Breast epithelium (tissue), 4 donors: ENCODE measurements at regions of chr7 and their contacts with region 1.

Region 1: GRCh38 chr7:122481046-122481445 is 176.5 kb upstream of the FEZF1 start:
- DNase-seq: no peak
- H3K4me3 ChIP-seq: no peak overlapping the region
- H3K27ac ChIP-seq: no peak overlapping the region
- H3K4me1 ChIP-seq: no peaks in the 10 kb centered on the region
- H3K27me3 ChIP-seq: no peaks in the 10 kb centered on the region
- CTCF ChIP-seq: no peak
- POLR2A ChIP-seq: no peak

Region 2: DNA sequence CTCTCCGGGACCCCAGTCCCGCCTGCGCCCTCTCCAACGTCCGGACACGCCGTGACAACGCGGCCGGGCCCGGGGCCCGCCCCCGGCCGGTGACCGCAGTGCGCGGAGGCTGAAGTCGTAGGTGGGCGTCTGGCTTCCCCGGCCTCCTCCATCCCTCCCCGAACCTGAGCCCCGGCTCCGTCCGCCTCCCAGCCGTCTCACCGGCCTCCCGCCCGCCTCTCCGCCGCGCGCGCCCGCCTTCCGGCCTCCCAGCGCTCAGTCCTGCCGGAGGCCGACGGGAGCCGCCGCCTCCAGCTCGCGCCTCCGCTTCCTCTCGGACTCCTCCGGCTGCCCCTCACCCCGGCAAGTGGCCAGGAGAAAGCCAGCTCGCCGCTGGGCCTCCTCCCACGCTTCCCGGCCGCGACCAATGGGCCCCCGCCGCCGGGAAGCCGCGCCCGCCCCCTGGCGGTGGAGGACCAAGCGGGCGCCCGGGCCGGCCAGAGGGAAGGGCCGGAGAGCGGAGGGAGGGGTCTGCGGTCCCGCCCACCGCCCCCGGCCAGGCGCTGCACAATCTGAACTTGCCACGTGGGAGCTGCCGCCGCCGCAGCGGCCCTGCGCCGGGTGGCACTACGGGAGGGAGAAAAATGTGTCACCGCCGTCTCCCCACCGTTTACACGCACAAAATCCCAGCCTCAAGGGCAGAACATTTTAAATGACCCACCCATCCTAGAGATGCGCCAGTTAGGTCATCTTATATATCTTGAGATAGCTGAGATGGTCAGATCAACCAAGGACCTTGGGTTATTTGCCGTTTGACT is 1084.9 kb before region 1 on chr7 and contains the start of gene FAM3C:
- intact Hi-C with region 1: no loop called
- DNase-seq: peak; percentile 81 to 83
- H3K4me3 ChIP-seq: peak within 1 kb of the TSS; percentile 84 to 95 (median 92)
- H3K27ac ChIP-seq: peak within 1 kb of the TSS; percentile 87 to 90
- H3K4me1 ChIP-seq: no peaks in the 10 kb centered on the region
- H3K27me3 ChIP-seq: no peaks in the 10 kb centered on the region
- CTCF ChIP-seq: peak; percentile 44 to 97 (median 91)
- POLR2A ChIP-seq: peak; percentile 48
- total RNA-seq, gene FAM3C: 35.8 to 89.7 (median 50.8) TPM

Region 3: GRCh38 chr7:121449329-121449728 is 1031.7 kb before region 1 on chr7:
- intact Hi-C with region 1: no loop called
- DNase-seq: no peak
- H3K4me3 ChIP-seq: no peak overlapping the region
- H3K27ac ChIP-seq: no peak overlapping the region
- H3K4me1 ChIP-seq: no peaks in the 10 kb centered on the region
- H3K27me3 ChIP-seq: no peaks in the 10 kb centered on the region
- CTCF ChIP-seq: no peak
- POLR2A ChIP-seq: no peak

Region 4: DNA sequence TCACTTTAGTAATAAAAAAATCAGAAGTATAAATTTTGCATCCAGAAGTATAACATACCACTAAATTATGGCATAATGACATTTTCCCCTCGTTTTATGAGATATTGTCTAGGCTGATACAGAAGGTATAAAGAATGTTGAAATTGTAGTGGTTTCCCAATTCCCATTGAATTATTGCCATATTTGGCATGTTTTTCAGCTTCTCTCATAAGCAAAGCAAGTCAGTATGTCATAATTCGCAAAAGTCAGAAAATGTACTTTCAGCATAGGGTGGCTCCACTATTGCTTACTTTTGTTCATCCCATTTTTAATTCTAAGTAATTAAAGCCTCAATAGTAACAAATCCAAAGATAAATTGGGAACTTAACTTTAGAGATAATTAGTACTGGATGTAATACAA is 627.7 kb before region 1 on chr7:
- intact Hi-C with region 1: no loop called
- DNase-seq: no peak
- H3K4me3 ChIP-seq: no peak overlapping the region
- H3K27ac ChIP-seq: no peak overlapping the region
- H3K4me1 ChIP-seq: no peaks in the 10 kb centered on the region
- H3K27me3 ChIP-seq: no peaks in the 10 kb centered on the region
- CTCF ChIP-seq: no peak
- POLR2A ChIP-seq: no peak

Region 5: DNA sequence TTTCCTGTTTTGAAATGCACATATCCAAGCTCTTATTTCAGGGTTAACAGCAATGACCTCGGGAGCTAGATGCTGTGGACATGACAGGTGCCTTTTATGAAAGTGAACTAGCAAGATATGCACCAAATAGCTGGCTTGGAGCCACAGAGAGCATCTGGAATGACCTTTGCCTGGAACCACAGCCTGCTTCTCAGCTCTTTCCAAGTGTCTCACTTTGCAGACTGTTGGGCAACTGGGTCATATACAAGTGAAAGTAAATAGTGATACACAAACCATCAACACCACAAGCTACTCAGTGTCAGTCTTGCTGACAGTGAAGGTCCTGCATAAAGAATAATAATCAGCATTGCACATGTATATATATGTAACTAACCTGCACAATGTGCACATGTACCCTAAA is 34.4 kb after region 1 on chr7:
- intact Hi-C with region 1: loop called (anchors 2 kb)
- DNase-seq: no peak
- H3K4me3 ChIP-seq: no peak overlapping the region
- H3K27ac ChIP-seq: no peak overlapping the region
- H3K4me1 ChIP-seq: no peaks in the 10 kb centered on the region
- H3K27me3 ChIP-seq: no peaks in the 10 kb centered on the region
- CTCF ChIP-seq: no peak
- POLR2A ChIP-seq: no peak